Prostate gland (tissue), 2 donors: ENCODE measurements at regions of chr2 and their contacts with region 1.

Region 1: GRCh38 chr2:42792583-42793333 is at the start of gene HAAO:
- DNase-seq: no peak
- H3K4me3 ChIP-seq: peak within 1 kb of the TSS; percentile 58 to 60
- H3K27ac ChIP-seq: peak within 1 kb of the TSS; percentile 89 to 95
- H3K4me1 ChIP-seq: peaks cover 5% of the 10 kb centered on the region
- H3K27me3 ChIP-seq: no peaks in the 10 kb centered on the region
- CTCF ChIP-seq: peak in 2 of 4 experiments; percentile 30 to 41
- POLR2A ChIP-seq: no peak
- total RNA-seq, gene HAAO: 10.3 to 14.0 TPM

Region 2: DNA sequence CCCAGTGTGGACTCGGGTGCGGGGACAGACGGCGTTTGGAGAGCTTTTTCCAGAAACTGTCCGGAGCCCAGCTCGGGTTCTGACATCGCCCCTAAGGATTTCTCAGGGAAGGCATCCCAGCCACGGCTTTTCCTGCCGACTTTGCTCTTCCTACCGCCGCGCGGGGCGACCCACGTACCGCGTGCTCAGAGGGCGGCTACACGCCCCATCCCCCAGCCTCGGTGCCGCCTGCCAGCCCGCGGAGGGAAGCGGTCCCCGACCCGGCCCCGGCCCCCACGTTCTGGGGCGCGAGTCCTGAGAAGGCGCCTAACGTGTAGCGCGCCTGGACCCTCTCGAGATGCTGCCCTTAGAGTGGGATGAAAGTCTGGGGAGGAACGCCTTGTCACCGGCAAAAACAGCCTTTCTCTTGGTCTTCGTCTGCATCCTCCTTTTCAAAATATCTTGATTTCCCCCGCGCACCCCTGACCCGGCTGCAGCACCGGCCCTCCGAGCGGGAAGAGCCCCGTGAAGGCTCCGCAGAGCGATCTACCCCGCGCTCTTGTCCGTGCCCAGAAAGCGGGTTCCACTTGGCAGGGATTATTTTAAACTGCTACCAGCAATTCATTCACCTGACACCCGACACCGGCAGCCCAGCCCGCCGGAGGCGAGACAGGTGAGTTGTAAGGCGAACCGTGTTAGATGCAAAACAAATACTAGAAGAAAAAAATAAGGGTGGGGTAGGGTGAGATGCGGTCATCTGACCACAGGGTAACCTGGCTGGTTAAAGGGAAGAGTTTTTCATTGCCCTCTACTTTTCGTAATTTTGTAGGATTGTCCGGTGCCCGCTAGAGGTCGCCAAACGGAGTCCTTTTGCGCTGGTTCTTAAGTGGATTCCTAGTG is 298.2 kb before region 1 on chr2:
- intact Hi-C with region 1: loop called (anchors 10 kb)
- DNase-seq: peak; percentile 76
- H3K4me3 ChIP-seq: peak overlapping the region; percentile 53 to 54
- H3K27ac ChIP-seq: peak overlapping the region; percentile 58 to 73
- H3K4me1 ChIP-seq: no peaks in the 10 kb centered on the region
- H3K27me3 ChIP-seq: no peaks in the 10 kb centered on the region
- CTCF ChIP-seq: peak; percentile 40 to 88 (median 79)
- POLR2A ChIP-seq: no peak

Region 3: GRCh38 chr2:42598656-42599055 is 194.1 kb before region 1 on chr2:
- intact Hi-C with region 1: no loop called
- DNase-seq: no peak
- H3K4me3 ChIP-seq: no peak overlapping the region
- H3K27ac ChIP-seq: no peak overlapping the region
- H3K4me1 ChIP-seq: no peaks in the 10 kb centered on the region
- H3K27me3 ChIP-seq: no peaks in the 10 kb centered on the region
- CTCF ChIP-seq: no peak
- POLR2A ChIP-seq: no peak

Region 4: GRCh38 chr2:42854207-42854818 is 61.6 kb after region 1 on chr2:
- intact Hi-C with region 1: no loop called
- DNase-seq: peak; percentile 54
- H3K4me3 ChIP-seq: no peak overlapping the region
- H3K27ac ChIP-seq: peak overlapping the region; percentile 70 to 71
- H3K4me1 ChIP-seq: no peaks in the 10 kb centered on the region
- H3K27me3 ChIP-seq: no peaks in the 10 kb centered on the region
- CTCF ChIP-seq: no peak
- POLR2A ChIP-seq: no peak